Activated T-helper 1 cell treated with anti-CD3 and anti-CD28 coated beads, Interleukin-12 subunit alpha, Interleukin-12 subunit beta, Interleukin-2, Interleukin-4 antibody, amounts not matched to agents 30 ng/mL and 10 ng/mL and 1 ng/mL, durations not matched to agents 14 hours and 24 hours and 36 hours (primary cell): ENCODE measurements at regions of chr15 and their contacts with region 1.

Region 1: GRCh38 chr15:84929744-84930371 is 45.4 kb downstream of the SLC28A1 start:
- DNase-seq: no peak
- H3K4me3 Mint-ChIP-seq: no peak overlapping the region
- H3K27ac Mint-ChIP-seq: no peak overlapping the region
- H3K4me1 Mint-ChIP-seq: peaks cover 6% of the 10 kb centered on the region
- H3K27me3 Mint-ChIP-seq: no peaks in the 10 kb centered on the region

Region 2: DNA sequence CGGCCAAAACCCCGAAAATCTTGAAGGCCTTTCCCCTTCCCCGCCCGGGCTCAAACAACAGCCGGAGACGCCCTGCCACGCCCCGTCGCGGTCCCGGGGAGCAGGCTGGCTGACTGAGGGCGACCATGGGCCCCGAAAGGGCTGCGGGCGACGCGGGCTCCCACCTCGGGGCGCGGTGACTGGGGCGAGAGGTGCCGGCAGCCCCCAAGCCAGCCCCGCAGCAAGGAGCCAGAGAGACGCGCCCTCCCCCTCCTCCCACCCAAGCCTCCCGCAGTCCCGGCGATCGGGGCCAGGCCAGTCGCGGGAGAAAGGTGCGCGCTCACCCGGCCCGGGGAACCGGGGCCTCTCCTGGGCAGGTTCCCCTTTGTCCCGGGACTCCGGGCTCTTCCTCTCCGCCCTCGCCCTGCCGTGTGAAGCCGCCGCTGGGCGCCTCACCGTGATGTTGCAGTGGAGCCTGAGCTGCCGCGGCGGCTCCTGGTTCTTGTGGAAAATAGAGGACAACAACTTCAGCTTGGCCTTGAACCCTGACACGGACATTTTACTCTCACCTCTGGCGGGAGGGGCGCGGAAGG is 359.6 kb before region 1 on chr15:
- intact Hi-C with region 1: loop called (anchors 1 kb)
- DNase-seq: peak; percentile 52
- H3K4me3 Mint-ChIP-seq: peak overlapping the region; percentile 84
- H3K27ac Mint-ChIP-seq: peak overlapping the region; percentile 90
- H3K4me1 Mint-ChIP-seq: peaks cover 11% of the 10 kb centered on the region
- H3K27me3 Mint-ChIP-seq: peaks cover 17% of the 10 kb centered on the region

Region 3: DNA sequence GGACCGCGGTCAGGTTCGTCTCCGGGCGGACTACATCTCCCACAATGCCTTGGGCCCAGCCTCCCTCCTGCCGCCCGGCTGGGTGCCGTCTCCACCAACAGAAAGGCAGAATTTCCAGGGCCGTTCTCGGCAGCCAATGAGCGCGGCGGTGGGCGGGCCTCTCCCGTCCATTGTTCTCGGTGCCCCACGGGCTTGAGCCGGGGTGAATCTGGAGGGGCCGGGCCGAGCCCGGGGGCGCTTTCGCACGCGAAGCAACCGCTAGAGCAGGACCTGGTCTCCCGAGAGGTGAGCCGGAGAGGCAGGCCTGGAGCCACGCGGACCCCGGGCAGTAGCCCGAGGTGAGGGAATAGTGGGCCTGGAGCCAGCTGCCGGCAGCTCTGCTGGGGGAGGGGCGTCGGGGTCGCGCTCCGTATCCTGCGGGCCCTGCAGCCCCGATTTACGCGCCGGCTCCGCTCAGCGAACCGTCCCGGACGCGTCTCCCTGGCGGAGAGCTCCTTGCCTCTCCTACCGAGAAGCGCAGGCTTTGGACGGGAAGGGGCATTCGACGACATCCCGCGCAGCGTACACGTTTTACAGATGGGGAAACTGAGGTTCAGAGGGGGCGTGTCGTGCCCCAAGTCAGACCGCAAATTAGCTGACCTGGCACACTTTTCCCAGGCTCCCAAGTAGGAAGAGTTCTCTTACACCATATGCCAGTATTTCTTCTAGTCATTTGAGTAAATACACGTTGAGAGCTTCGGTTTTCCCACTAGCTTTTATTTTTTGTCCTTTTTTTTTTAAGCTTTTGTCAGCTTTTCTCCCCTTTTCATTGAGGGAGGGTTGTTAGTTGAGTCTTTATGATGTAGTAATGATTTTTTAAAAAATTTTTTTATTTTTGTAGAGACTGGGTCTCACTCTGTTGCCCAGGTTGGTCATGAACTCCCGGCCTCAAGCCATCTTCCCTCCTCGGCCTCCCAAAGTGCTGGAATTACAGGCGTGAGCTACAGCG is 328.7 kb before region 1 on chr15 and contains the start of gene ZSCAN2:
- intact Hi-C with region 1: loop called (anchors 1 kb)
- DNase-seq: peak; percentile 92
- H3K4me3 Mint-ChIP-seq: peak within 1 kb of the TSS; percentile 89
- H3K27ac Mint-ChIP-seq: peak within 1 kb of the TSS; percentile 72
- H3K4me1 Mint-ChIP-seq: peaks cover 59% of the 10 kb centered on the region
- H3K27me3 Mint-ChIP-seq: no peaks in the 10 kb centered on the region
- total RNA-seq, gene ZSCAN2: 6.5 and 7.0 TPM in 2 replicates

Region 4: DNA sequence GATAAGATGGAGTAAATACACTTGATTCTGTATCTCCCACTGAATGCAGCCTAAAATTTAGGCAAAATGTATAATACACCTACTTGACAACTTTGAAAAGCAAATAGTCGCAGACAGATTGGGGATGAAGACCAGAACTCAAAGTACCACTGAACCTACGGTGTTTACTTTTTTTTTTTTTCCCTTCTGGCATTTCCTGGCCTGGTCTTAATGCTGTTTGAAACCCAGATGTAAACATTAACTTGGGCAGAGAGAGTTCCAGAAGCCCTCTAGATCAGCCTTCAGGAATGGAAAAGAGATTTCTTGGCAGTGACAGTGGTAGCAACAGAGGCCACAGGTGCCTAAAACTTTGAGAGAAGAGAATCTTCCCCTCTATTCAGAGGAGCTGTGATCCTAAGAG is 84.9 kb before region 1 on chr15:
- intact Hi-C with region 1: loop called (anchors 1 kb)
- DNase-seq: no peak
- H3K4me3 Mint-ChIP-seq: no peak overlapping the region
- H3K27ac Mint-ChIP-seq: no peak overlapping the region
- H3K4me1 Mint-ChIP-seq: no peaks in the 10 kb centered on the region
- H3K27me3 Mint-ChIP-seq: no peaks in the 10 kb centered on the region

Region 5: GRCh38 chr15:84883433-84883832 is 46.4 kb before region 1 on chr15:
- intact Hi-C with region 1: loop called (anchors 1 kb)
- DNase-seq: no peak
- H3K4me3 Mint-ChIP-seq: no peak overlapping the region
- H3K27ac Mint-ChIP-seq: no peak overlapping the region
- H3K4me1 Mint-ChIP-seq: no peaks in the 10 kb centered on the region
- H3K27me3 Mint-ChIP-seq: no peaks in the 10 kb centered on the region